ENCODE measurements at regions of chr2 and their contacts with region 1.

Region 1: GRCh38 chr2:48144777-48145176 is 238.5 kb upstream of the FBXO11 start:
- DNase-seq: no peak
- ATAC-seq: no peak

Region 2: DNA sequence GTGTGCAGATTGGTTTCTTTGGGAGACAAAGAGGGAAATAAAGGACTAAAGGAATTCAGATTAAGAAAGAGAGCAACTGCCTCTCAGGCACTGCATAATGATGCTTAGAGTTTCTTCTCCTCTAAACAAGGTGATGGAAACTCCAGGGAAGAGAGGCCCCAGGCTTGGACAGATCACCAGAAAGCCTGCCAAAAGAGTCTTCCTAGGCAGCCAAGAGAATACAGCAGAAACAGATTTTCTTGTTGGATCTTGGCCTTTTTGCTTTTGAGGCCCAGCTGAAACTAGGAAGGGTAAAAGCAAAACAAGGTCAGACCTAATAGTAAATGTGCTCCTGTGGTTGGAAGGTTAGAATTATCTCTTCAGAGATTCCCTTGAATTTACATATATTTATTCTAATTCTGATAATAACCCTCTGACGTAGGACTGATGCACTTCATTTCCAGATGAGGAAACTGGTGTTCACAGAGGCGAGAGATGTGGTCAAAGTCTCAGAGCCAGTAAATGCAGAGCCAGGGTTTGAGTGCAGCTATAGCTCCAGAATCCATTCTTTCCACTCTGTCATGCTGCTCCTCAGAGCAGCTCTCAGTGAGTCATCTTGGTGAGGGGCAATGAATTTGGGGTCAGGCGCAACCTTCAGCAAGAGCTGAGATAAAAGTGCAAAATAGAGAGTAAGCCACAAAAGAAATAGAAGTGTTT is 96.2 kb before region 1 on chr2:
- intact Hi-C with region 1: no loop called
- DNase-seq: no peak
- ATAC-seq: no peak

Region 3: GRCh38 chr2:48189552-48190228 is 44.9 kb after region 1 on chr2:
- intact Hi-C with region 1: loop called in 1 of 2 experiments (anchors 5 kb)
- DNase-seq: peak in 1 of 2 donors; percentile 31
- ATAC-seq: no peak